PC-3 (cell line): ENCODE measurements at regions of chr2 and their contacts with region 1.

Region 1: GRCh38 chr2:168246483-168247340 is 683 bp downstream of the STK39 start:
- DNase-seq: peak; percentile 54
- ATAC-seq: peak; percentile 49
- H3K4me3 ChIP-seq: peak overlapping the region; percentile 98
- H3K27ac ChIP-seq: peak overlapping the region; percentile 53
- H3K4me1 ChIP-seq: peaks cover 36% of the 10 kb centered on the region
- H3K27me3 ChIP-seq: no peaks in the 10 kb centered on the region
- CTCF ChIP-seq: peak; percentile 46

Region 2: DNA sequence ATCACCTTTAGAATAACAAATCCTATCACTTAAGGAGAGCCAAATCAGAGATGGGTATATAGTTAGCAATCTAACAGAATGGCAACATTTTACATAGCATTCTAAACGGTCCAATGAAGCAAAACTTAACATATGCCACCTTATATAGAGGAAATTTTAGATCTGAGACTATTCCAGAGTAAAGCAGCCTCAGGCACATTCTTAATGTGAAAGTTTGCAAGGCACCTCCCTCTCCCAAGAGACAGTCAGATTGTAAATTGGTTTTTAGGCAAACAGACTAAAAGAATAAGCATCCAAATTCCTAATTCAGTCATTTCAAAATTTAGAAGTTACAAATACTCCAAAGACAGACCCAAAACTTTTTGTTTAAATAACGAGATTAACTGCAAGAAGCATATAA is 292.2 kb before region 1 on chr2:
- CTCF ChIA-PET with region 1: no interaction called
- POLR2A ChIA-PET with region 1: no interaction called
- intact Hi-C with region 1: no loop called
- DNase-seq: peak; percentile 18
- ATAC-seq: peak; percentile 64; the same call in 1 of the 2 replicates
- H3K4me3 ChIP-seq: no peak overlapping the region
- H3K27ac ChIP-seq: no peak overlapping the region
- H3K4me1 ChIP-seq: peaks cover 12% of the 10 kb centered on the region
- H3K27me3 ChIP-seq: no peaks in the 10 kb centered on the region
- CTCF ChIP-seq: no peak

Region 3: GRCh38 chr2:168156661-168157060 is 90.1 kb before region 1 on chr2:
- CTCF ChIA-PET with region 1: no interaction called
- POLR2A ChIA-PET with region 1: no interaction called
- intact Hi-C with region 1: loop called (anchors 5 kb)
- DNase-seq: peak; percentile 80
- ATAC-seq: peak; percentile 73
- H3K4me3 ChIP-seq: no peak overlapping the region
- H3K27ac ChIP-seq: peak overlapping the region; percentile 92
- H3K4me1 ChIP-seq: peaks cover 29% of the 10 kb centered on the region
- H3K27me3 ChIP-seq: no peaks in the 10 kb centered on the region
- CTCF ChIP-seq: no peak

Region 4: DNA sequence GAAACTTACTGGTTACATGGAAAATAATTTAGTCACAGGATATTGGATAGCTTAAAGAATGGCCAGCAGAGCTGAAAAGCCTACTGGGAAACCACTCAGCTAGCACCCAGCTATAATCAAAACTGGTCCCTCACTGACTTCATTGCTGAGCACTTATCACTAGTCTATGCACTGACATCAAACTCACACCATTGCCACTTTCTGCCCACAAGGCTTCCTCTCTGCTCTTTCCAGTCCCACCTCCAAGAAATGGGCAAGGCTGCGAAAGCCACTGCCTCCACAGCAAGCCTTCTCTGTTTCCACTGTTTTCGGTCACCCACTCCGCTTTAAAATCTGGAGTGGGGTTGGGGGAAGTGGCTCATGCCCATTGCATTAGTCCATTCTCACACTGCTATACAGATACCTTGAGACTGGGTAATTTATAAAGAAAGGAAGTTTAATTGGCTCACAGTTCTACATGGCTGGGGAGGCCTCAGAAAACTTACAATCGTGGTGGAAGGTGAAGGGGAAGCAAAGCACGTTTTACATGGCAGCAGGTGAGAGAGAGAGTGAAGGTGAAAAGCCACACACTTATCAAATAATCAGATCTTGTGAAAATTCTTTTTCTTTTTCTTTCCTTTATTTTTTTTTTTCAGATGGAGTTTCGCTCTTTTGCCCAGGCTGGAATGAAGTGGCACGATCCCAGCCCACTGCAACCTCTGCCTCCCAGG is 132.4 kb after region 1 on chr2:
- CTCF ChIA-PET with region 1: no interaction called
- POLR2A ChIA-PET with region 1: no interaction called
- intact Hi-C with region 1: no loop called
- DNase-seq: no peak
- ATAC-seq: no peak
- H3K4me3 ChIP-seq: no peak overlapping the region
- H3K27ac ChIP-seq: no peak overlapping the region
- H3K4me1 ChIP-seq: no peaks in the 10 kb centered on the region
- H3K27me3 ChIP-seq: no peaks in the 10 kb centered on the region
- CTCF ChIP-seq: no peak